Posterior vena cava (tissue), 2 donors: ENCODE measurements at regions of chr14 and their contacts with region 1.

Region 1: DNA sequence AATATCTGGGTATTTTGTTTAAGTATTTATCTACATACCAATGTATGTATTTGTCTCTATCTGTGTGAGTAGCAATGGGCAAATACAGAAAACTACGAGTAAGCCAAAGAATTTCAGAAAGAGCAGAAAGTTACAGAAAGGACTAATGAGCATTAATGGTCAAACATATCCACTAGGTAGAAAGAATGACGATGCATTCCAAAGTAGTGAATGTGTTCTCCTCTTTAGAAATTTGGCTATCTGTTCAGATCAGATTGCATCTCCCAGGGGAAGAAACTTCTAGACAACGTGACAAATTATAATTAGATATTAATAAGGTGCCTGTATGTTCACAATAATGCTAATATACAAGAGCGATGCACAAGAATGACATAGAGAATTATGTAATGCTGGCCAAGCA is 194.5 kb upstream of the GZMB start:
- DNase-seq: no peak

Region 2: DNA sequence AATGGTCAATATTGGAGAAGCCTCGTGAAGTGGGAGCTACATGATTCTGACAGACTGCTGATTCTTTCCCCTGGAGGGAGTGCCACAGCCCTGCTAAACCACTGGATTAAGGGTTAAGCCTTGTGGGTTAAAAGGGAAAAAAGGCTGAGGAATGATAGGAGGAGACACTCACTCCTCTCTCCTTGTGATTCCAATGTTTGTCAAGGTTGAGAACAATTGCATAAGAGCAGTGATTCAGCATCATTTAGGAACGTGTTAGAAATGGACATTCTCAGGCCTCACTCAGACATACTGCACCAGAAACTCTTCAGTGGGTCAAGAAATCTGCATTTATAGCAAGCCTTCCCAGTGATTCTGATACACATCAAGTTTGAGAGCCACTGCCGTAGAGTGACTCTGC is 106.7 kb before region 1 on chr14:
- intact Hi-C with region 1: no loop called
- DNase-seq: no peak

Region 3: GRCh38 chr14:24844011-24844410 is 15.5 kb after region 1 on chr14:
- intact Hi-C with region 1: loop called in 1 of 2 experiments (anchors 1 kb)
- DNase-seq: no peak

Region 4: DNA sequence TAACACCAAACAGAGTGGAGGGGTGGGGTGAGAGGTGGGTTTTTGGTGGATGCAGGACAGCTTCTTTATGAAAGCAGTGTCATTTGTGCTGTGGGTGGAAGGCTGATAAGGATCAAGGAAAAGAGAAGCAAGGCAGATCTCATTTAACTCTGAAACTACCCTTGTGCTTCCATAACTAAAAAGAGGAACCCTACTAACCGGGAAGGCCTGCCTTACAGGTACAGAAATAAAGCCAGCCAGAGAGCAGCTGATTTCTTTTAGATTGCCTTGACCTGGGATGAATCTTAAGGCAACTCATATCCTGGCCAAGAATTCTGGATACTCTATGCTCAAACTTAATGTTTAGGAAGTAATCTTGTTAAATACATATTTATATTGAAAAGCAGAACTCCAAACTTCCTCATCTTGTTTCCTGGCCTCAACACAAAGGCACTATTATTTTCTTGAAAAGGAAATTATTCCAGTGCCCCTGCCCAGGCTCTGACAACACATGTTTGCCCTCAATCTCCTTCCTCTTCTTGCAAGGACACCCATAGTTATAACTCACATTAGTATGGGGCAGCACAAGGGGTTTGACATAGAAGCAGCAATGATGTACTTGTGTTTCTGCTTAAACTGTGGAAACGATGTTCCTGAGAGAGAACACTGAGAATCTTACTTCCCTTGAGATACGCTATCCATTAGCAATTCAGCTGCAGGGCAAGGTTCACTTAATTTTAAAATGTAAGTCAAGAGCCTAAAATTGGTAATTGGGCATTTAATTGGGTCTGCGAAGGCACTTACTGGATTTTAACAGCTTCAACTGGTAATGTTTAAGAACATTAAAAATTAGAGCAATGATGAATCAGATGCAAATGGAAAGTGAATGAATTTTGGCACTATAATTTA is 47.7 kb after region 1 on chr14:
- intact Hi-C with region 1: loop called in 1 of 2 experiments (anchors 10 kb)
- DNase-seq: no peak

Region 5: GRCh38 chr14:24959791-24960331 is 131.4 kb after region 1 on chr14:
- intact Hi-C with region 1: no loop called
- DNase-seq: no peak